ENCODE measurements at regions of chr12 and their contacts with region 1.

Region 1: DNA sequence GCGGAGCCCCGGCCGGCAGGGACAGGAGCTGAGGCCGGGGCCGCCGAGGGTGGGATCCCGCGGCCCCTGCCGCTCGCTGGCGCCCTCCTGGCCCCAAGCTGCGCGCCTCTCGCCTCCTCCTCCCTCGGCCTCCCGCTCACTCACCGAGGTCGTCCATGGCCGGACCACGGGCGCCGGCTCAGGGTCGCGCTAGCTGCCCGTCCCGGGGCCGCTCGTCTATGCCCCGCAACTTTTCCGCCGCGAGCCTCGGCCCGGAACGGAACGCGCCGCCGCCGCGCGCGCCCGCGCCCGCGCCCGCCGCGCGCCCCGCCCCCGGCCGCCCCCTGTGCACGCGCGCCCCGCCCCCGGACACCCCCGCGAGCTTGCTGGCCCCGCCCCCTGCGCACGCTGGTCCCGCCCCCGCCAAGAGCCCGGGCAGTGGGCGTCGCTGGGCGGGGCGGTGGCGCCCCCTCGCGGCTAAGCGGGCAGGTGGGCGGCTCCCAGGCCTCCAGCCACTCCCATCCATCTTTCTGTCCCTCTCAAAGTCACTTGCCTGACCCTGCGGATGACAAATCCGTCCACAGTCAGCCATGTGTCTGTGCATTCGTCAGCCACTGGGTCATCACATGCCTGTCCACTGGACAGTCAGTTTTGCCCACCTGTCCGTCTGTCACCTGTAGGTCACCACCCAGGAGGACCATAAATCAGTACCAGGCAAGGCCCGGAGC is at the start of gene PXN:
- DNase-seq: peak; percentile 92
- ATAC-seq: peak; percentile 92
- H3K4me3 Mint-ChIP-seq: peak within 1 kb of the TSS; percentile 81
- H3K27ac Mint-ChIP-seq: peak within 1 kb of the TSS; percentile 77
- H3K4me1 Mint-ChIP-seq: peaks cover 47% of the 10 kb centered on the region
- H3K27me3 Mint-ChIP-seq: no peaks in the 10 kb centered on the region
- total RNA-seq, gene PXN: 123 to 127 TPM

Region 2: DNA sequence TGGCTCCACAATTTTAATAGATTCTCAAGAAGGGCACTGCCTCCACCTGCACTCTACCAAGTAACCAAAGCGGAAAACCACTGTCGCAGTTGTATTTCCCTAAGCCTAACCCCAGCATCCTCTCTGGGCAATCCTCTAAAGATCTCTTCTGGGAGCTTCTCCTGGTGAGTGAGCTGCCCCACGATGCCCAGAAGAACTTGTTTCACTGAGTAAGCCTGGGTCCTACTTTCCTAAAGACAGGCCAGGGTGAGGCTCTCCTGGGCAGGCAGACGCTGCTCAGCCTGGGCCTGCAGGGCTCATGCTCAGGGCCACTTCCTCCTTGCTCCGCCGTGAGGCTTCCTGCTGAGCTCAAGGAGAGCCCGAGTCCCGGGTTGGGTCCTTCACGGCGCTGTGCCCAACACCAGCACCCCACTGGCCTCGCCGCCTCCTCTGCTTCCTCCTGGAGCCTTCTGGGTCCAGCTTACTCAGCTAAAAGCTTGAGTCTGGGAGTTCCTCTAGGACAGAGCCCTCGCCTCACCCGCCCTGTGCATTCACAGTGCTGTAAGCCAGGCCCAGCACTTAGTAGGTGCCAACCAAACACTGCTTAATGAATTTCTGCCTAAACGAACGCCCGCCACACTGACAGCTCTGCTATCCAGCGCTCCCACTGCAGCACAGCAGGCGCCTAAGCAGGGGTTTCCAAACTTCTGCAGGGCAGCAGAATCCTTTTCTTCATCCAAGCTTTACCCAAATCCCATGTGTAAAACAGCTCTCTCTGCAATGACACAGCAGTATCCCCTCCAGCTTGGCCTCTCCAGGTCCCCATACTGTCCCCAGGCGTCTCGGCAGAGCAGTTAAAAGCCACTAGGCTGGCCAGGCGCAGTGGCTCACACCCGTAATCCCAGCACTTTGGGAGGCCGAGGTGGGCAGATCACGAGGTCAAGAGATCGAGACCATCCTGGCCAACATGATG is 154.8 kb before region 1 on chr12:
- CTCF ChIA-PET with region 1: no interaction called
- POLR2A ChIA-PET with region 1: no interaction called
- DNase-seq: peak; percentile 69
- ATAC-seq: peak; percentile 85
- H3K4me3 Mint-ChIP-seq: peak overlapping the region; percentile 69
- H3K27ac Mint-ChIP-seq: peak overlapping the region; percentile 82
- H3K4me1 Mint-ChIP-seq: peaks cover 70% of the 10 kb centered on the region
- H3K27me3 Mint-ChIP-seq: no peaks in the 10 kb centered on the region

Region 3: GRCh38 chr12:120194534-120195395 is 70.9 kb before region 1 on chr12 and contains the start of gene GCN1:
- CTCF ChIA-PET with region 1: interaction called, 45 read pairs
- POLR2A ChIA-PET with region 1: interaction called, 41 read pairs
- DNase-seq: peak; percentile 88
- ATAC-seq: peak; percentile 84
- H3K4me3 Mint-ChIP-seq: peak within 1 kb of the TSS; percentile 89
- H3K27ac Mint-ChIP-seq: peak within 1 kb of the TSS; percentile 93
- H3K4me1 Mint-ChIP-seq: peaks cover 57% of the 10 kb centered on the region
- H3K27me3 Mint-ChIP-seq: no peaks in the 10 kb centered on the region
- total RNA-seq, gene GCN1: 109 to 112 TPM

Region 4: DNA sequence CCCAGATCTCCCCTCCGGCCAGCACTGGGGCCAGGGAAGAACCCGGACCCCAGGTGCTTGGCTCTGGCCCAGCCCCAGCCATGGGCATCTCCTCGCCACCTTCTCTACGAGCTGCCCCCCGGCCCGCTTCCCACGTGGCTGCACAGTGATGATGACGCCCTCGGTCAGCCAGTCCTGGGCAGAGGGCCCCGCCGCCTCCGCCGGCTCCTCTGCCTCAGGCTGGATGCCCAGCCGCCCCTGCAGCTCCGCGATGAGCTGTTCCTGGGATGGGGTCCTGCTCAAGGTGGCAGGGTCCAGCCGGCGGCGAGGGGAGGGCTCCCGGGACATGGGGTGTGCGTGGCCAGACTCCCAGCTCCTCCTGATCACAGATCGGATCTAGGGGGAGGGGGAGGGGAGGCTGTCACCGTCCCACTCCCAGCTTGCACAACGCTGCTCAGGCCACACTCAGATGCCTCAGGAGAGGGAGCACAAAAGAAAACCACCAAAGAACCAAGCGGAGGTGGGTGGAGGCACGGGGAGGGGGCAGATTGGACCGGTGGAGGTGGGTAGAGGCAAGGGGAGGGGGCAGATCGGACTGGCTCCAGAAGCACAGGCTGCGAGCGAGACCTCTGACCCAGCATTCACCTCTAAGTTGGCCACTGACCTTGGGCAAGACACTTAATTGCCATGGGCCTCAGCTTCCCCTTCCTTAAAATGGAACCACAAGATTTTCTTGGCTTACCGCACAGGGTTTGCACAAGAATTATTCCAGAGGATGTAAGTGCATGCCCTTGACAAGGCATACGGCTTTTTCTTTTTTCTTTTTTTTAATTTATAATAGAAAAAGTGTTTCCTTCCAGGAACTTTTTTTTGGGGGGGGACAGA is 48.7 kb before region 1 on chr12:
- CTCF ChIA-PET with region 1: interaction called, 15 read pairs
- POLR2A ChIA-PET with region 1: no interaction called
- DNase-seq: no peak
- ATAC-seq: no peak
- H3K4me3 Mint-ChIP-seq: no peak overlapping the region
- H3K27ac Mint-ChIP-seq: no peak overlapping the region
- H3K4me1 Mint-ChIP-seq: no peaks in the 10 kb centered on the region
- H3K27me3 Mint-ChIP-seq: no peaks in the 10 kb centered on the region

Region 5: DNA sequence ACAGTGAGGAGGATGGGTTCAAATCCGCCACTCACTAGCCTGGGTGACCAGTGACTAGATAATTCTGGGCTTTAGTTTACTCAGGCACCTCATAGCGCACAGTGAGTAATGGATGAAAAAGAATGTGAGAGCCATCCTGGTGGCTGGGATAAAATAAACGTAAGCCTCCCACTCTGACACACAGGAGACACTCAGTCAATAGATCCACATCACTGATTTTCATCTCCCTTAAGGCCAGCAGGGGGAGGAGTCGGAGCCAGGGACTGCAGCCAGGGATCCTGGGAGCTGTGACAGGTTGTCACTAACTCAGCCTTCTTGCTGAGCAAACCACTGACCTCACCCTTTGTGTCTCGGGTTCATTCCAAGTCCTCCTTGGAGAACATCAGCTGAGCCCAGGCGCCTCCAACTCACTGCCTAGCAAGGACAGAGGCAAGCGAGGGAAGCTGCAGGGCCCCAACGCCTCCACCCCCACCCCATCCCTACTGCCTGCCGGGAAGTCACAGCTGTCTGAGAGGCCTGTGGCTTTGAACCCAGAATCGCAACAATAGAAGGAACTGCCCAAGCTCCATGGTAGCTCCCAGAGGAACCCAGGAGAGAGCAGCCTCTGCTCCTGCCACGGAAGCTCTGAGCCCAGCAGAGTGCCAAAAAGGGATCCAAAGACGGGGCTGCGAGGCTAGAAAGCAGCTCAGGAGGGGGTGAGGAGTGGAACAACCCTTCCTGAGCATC is 30.8 kb before region 1 on chr12:
- CTCF ChIA-PET with region 1: interaction called, 922 read pairs
- POLR2A ChIA-PET with region 1: interaction called, 11 read pairs
- DNase-seq: no peak
- ATAC-seq: no peak
- H3K4me3 Mint-ChIP-seq: no peak overlapping the region
- H3K27ac Mint-ChIP-seq: no peak overlapping the region
- H3K4me1 Mint-ChIP-seq: peaks cover 74% of the 10 kb centered on the region
- H3K27me3 Mint-ChIP-seq: no peaks in the 10 kb centered on the region

Region 6: DNA sequence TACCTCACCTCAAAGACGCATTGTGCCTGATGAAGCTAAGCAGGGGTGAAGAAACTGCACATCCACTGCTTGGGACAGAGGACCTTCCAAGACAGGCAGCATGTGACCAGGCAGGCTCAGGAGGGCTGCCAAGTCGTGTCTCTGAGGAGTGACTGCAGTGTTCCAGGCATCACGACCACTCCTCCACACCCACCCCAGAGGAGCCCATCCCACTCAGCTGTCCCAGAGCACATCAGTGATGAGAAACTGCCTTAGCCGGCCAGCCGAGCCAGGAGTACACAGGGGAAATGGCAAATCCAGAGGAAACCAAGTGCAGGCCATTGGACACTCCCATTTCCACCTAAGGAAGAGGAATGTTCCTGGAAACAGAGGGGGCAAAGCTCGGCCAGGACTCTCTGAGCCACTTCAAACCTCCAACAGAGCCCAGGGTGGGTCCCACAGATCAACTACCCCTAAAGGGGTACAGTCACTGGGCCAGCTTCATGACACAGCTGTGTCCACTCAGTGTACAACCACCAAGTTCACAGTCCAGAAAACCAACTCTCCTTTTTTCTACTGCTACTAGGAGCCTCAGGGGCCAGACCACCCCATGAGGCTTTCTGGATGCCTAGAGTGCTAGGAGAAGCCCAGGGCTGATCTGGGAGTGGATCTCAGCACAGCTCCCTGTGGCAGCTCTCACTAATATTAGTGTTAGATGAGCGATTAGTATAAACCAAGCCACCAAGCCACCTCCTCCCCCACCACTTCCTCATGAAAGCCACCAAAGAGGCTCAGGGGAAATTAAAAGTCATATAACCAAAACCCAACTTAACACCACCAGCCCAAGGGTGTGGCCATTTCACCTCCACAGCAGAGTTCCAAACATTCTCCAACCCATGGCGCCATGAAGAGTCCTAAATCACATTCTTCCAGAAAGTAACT is 15.5 kb before region 1 on chr12:
- CTCF ChIA-PET with region 1: interaction called, 53 read pairs
- POLR2A ChIA-PET with region 1: interaction called, 12 read pairs
- DNase-seq: peak; percentile 72
- ATAC-seq: peak; percentile 10
- H3K4me3 Mint-ChIP-seq: peak overlapping the region; percentile 67
- H3K27ac Mint-ChIP-seq: peak overlapping the region; percentile 90
- H3K4me1 Mint-ChIP-seq: peaks cover 77% of the 10 kb centered on the region
- H3K27me3 Mint-ChIP-seq: peaks cover 10% of the 10 kb centered on the region

Region 7: GRCh38 chr12:120276734-120277133 is 11.1 kb after region 1 on chr12:
- CTCF ChIA-PET with region 1: no interaction called
- POLR2A ChIA-PET with region 1: no interaction called
- DNase-seq: no peak
- ATAC-seq: no peak
- H3K4me3 Mint-ChIP-seq: no peak overlapping the region
- H3K27ac Mint-ChIP-seq: no peak overlapping the region
- H3K4me1 Mint-ChIP-seq: no peaks in the 10 kb centered on the region
- H3K27me3 Mint-ChIP-seq: no peaks in the 10 kb centered on the region

Region 8: GRCh38 chr12:120399531-120399930 is 133.9 kb after region 1 on chr12:
- CTCF ChIA-PET with region 1: no interaction called
- POLR2A ChIA-PET with region 1: no interaction called
- DNase-seq: no peak
- ATAC-seq: no peak
- H3K4me3 Mint-ChIP-seq: no peak overlapping the region
- H3K27ac Mint-ChIP-seq: no peak overlapping the region
- H3K4me1 Mint-ChIP-seq: peaks cover 4% of the 10 kb centered on the region
- H3K27me3 Mint-ChIP-seq: peaks cover 12% of the 10 kb centered on the region